HCT116 (cell line): ENCODE measurements at regions of chr16 and their contacts with region 1.

Region 1: GRCh38 chr16:66639091-66639885 is 34.8 kb downstream of the CMTM3 start:
- DNase-seq: no peak
- ATAC-seq: no peak
- H3K4me3 ChIP-seq: no peak overlapping the region
- H3K27ac ChIP-seq: no peak overlapping the region
- H3K4me1 ChIP-seq: peaks cover 4 to 11% of the 10 kb centered on the region in 2 experiments; a peak in 2 of 4 replicates
- H3K27me3 ChIP-seq: no peaks in the 10 kb centered on the region
- CTCF ChIP-seq: no peak
- POLR2A ChIP-seq: no peak
- RAD21 ChIP-seq: no peak

Region 2: DNA sequence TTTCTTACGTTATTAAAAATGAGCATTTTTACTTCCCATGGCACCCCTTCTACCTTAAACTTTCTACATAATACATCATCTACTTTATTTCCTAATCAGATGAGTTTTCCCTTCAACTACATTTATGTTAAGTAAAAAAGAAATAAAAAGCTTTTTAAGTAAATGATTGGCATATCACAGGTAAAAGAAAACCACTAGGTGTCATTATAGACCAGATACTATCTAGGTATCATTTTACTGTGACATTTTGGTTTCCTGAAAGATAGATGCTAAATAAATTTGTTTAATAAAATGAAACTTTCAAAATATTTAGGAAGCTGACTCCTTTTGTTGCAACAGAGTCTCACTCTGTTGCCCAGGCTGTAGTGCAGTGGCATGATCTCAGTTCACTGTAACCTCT is 76.9 kb before region 1 on chr16:
- CTCF ChIA-PET with region 1: no interaction called
- POLR2A ChIA-PET with region 1: no interaction called
- RAD21 ChIA-PET with region 1: no interaction called
- intact Hi-C with region 1: no loop called
- DNase-seq: no peak
- ATAC-seq: no peak
- H3K4me3 ChIP-seq: no peak overlapping the region
- H3K27ac ChIP-seq: no peak overlapping the region
- H3K4me1 ChIP-seq: no peaks in the 10 kb centered on the region
- H3K27me3 ChIP-seq: no peaks in the 10 kb centered on the region
- CTCF ChIP-seq: peak in 2 of 3 experiments; percentile 30; a peak in 2 of 6 replicates
- POLR2A ChIP-seq: no peak
- RAD21 ChIP-seq: peak; percentile 54

Region 3: DNA sequence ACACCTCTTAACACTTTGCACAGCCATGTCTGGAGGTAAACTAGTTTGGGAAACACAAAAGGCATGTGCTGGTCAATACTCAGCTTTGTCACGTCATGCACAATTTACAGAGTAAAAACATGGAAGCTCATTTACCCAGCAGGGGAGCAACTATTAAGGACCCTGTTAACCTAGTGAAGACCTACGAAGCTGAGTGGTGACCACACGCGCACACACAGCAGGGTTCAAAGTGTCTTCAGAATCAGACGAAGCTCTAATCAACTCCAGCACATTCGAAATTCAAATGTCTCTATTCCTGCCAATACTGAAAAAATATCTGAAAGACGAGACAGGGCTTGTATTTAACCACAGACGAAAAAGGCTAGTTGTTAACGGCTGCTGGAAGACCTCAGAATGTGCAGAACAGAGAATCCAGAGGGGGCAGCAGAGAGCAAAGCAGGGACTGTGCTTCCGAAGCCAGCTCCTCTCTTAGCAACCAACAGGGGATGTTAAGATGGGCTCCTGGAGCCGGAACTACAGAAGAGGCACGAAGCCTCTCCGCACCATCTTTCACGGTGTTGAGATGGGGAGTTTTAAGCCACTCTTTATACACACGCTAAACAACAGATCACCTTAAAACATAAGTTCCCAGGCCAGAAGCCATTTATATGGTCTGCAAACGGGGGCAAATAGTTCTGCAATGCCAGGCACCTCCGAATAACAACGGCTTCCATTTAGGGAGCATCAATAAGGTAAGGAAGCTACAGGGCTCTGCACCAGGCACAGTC is 11.6 kb after region 1 on chr16:
- CTCF ChIA-PET with region 1: interaction called, 10 read pairs
- POLR2A ChIA-PET with region 1: no interaction called
- RAD21 ChIA-PET with region 1: no interaction called
- intact Hi-C with region 1: no loop called
- DNase-seq: peak; percentile 60
- ATAC-seq: peak; percentile 100
- H3K4me3 ChIP-seq: no peak overlapping the region
- H3K27ac ChIP-seq: no peak overlapping the region
- H3K4me1 ChIP-seq: peaks cover 0 to 8% of the 10 kb centered on the region in 2 experiments; a peak in 3 of 4 replicates
- H3K27me3 ChIP-seq: no peaks in the 10 kb centered on the region
- CTCF ChIP-seq: peak; percentile 65 to 94 (median 89); a peak in 5 of 6 replicates
- POLR2A ChIP-seq: no peak
- RAD21 ChIP-seq: peak; percentile 57

Region 4: GRCh38 chr16:66728117-66728787 is 89.0 kb after region 1 on chr16:
- CTCF ChIA-PET with region 1: no interaction called
- POLR2A ChIA-PET with region 1: no interaction called
- RAD21 ChIA-PET with region 1: no interaction called
- intact Hi-C with region 1: no loop called
- DNase-seq: peak; percentile 28
- ATAC-seq: peak; percentile 90
- H3K4me3 ChIP-seq: no peak overlapping the region
- H3K27ac ChIP-seq: no peak overlapping the region
- H3K4me1 ChIP-seq: no peaks in the 10 kb centered on the region
- H3K27me3 ChIP-seq: no peaks in the 10 kb centered on the region
- CTCF ChIP-seq: peak; percentile 54 to 79 (median 75)
- POLR2A ChIP-seq: no peak
- RAD21 ChIP-seq: peak; percentile 64